ENCODE measurements at regions of chr5 and their contacts with region 1.

Region 1: GRCh38 chr5:146662229-146662628 is 146.2 kb upstream of the GPR151 start:
- DNase-seq: no peak
- ATAC-seq: no peak
- H3K4me3 ChIP-seq: no peak overlapping the region
- H3K27ac ChIP-seq: no peak overlapping the region
- H3K4me1 ChIP-seq: no peaks in the 10 kb centered on the region
- H3K27me3 ChIP-seq: no peaks in the 10 kb centered on the region
- CTCF ChIP-seq: peak in 8 of 9 donors; percentile 17 to 60 (median 50)

Region 2: GRCh38 chr5:146633323-146633764 is 28.9 kb before region 1 on chr5:
- intact Hi-C with region 1: loop called in 1 of 10 experiments (anchors 1 kb)
- DNase-seq: no peak
- ATAC-seq: no peak
- H3K4me3 ChIP-seq: no peak overlapping the region
- H3K27ac ChIP-seq: no peak overlapping the region
- H3K4me1 ChIP-seq: peaks cover 0 to 7% (median 0%) of the 10 kb centered on the region in 9 donors
- H3K27me3 ChIP-seq: no peaks in the 10 kb centered on the region
- CTCF ChIP-seq: no peak

Measured in heart right ventricle (tissue), 16 donors.